ENCODE measurements at regions of chr6 and their contacts with region 1.

Region 1: DNA sequence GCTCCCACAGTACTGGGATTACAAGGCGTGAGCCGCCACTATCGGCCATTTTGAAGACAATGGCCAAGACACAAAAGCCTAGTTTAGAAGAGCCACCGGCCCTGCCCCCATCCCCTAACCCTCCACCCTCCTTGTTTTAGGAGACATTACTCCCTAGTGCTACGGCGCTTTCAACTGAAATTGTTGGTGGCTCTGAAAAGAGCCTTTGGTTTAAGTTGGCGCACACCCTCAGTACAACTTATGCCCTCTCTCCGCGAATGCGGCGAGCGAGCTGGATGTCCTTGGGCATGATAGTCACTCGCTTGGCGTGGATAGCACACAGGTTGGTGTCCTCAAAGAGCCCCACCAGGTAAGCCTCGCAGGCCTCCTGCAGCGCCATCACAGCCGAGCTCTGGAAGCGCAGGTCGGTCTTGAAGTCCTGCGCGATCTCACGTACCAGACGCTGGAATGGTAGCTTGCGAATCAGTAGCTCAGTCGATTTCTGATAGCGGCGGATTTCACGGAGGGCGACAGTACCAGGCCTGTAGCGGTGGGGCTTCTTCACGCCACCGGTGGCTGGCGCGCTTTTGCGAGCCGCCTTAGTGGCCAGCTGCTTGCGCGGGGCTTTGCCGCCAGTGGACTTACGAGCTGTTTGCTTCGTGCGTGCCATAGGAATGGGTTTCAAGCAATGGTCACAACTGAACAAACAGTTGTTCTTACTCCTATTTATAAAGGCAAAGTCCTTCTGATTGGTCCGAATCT is 114.9 kb upstream of the BTN3A2 start:
- DNase-seq: peak; percentile 84
- ATAC-seq: peak; percentile 68
- H3K4me3 Mint-ChIP-seq: peak overlapping the region; percentile 82
- H3K27ac Mint-ChIP-seq: peak overlapping the region; percentile 99
- H3K4me1 Mint-ChIP-seq: peaks cover 27% of the 10 kb centered on the region
- H3K27me3 Mint-ChIP-seq: no peaks in the 10 kb centered on the region
- CTCF ChIP-seq: peak; percentile 43

Region 2: GRCh38 chr6:26175428-26176181 is 74.5 kb before region 1 on chr6:
- CTCF ChIA-PET with region 1: interaction called, 4 read pairs
- POLR2A ChIA-PET with region 1: interaction called, 11 read pairs
- intact Hi-C with region 1: no loop called
- DNase-seq: peak; percentile 72
- ATAC-seq: peak; percentile 17
- H3K4me3 Mint-ChIP-seq: peak overlapping the region; percentile 46
- H3K27ac Mint-ChIP-seq: peak overlapping the region; percentile 63
- H3K4me1 Mint-ChIP-seq: peaks cover 38% of the 10 kb centered on the region
- H3K27me3 Mint-ChIP-seq: no peaks in the 10 kb centered on the region
- CTCF ChIP-seq: peak; percentile 86

Region 3: DNA sequence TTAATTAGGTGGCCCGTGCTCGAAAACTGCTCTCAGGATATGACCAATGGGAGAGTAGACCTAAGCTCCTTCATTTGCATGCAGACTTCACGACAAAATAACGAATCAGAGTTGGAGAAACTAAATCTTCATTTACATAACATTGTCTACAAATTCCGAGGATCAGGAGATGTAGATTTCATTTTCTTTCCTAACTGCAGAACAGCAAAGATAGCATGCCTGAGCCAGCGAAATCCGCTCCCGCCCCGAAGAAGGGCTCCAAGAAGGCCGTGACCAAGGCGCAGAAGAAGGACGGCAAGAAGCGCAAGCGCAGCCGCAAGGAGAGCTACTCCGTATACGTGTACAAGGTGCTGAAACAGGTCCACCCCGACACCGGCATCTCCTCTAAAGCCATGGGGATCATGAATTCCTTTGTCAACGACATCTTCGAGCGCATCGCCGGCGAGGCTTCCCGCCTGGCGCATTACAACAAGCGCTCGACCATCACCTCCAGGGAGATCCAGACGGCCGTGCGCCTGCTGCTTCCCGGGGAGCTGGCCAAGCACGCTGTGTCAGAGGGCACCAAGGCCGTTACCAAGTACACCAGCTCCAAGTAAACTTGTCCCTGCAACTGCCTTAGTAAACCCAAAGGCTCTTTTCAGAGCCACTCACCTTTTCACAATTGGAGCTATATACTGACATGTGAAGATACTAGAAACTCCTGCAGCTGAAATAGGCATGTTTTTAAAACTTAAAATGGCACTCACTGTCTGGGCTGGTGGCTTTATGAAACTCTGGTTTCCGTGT is 66.4 kb before region 1 on chr6:
- CTCF ChIA-PET with region 1: interaction called, 5 read pairs
- POLR2A ChIA-PET with region 1: interaction called, 20 read pairs
- intact Hi-C with region 1: no loop called
- DNase-seq: peak; percentile 72
- ATAC-seq: peak; percentile 82
- H3K4me3 Mint-ChIP-seq: peak overlapping the region; percentile 76
- H3K27ac Mint-ChIP-seq: peak overlapping the region; percentile 84
- H3K4me1 Mint-ChIP-seq: peaks cover 38% of the 10 kb centered on the region
- H3K27me3 Mint-ChIP-seq: no peaks in the 10 kb centered on the region
- CTCF ChIP-seq: no peak

Region 4: GRCh38 chr6:26204332-26205165 is 45.6 kb before region 1 on chr6:
- CTCF ChIA-PET with region 1: interaction called, 3 read pairs
- POLR2A ChIA-PET with region 1: interaction called, 66 read pairs
- intact Hi-C with region 1: no loop called
- DNase-seq: peak; percentile 91
- ATAC-seq: peak; percentile 75
- H3K4me3 Mint-ChIP-seq: no peak overlapping the region
- H3K27ac Mint-ChIP-seq: no peak overlapping the region
- H3K4me1 Mint-ChIP-seq: peaks cover 17% of the 10 kb centered on the region
- H3K27me3 Mint-ChIP-seq: no peaks in the 10 kb centered on the region
- CTCF ChIP-seq: no peak

Region 5: DNA sequence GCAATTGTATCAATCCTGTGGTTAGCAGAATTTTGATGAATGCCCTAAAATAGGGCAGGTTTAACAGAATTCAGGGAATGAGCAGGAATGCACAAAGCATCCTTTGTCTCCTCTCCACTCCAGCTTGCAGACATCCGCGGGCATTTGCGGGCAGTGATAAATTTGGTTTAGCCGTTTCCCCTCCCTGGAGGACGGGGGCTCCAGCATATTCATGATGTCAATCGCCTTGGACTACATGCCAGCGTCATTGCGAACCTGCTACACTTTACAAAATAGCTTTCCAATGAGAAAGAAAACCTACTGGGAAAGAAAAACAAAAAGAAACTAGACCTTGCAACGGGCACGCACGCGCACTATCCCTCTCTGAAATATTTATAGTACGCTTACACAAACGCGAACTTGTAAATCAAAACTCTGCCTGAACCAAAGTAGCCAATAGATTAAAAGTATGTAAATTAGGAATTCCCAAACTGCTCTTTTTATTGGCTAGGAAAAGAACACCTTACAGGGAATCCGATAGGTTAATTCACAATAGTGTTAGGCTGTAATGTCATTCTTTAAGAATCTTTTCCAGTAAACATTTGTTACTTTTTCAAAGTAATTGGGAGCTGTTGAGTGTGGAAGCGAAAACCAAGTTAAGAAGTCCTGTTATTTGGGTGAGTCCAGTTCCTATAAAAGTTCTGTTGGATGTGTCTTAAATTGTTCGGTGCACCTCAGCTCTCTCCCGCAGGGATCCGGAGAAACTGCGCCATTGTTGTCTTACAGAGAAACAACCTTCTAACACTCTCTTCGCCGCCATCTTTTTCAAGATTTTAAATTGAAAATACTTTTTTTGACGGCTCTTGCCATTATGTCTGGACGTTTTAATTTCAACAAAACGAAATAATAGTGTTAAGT is 26.2 kb before region 1 on chr6:
- CTCF ChIA-PET with region 1: interaction called, 8 read pairs
- POLR2A ChIA-PET with region 1: interaction called, 35 read pairs
- intact Hi-C with region 1: no loop called
- DNase-seq: peak; percentile 77
- ATAC-seq: peak; percentile 82
- H3K4me3 Mint-ChIP-seq: no peak overlapping the region
- H3K27ac Mint-ChIP-seq: no peak overlapping the region
- H3K4me1 Mint-ChIP-seq: peaks cover 14% of the 10 kb centered on the region
- H3K27me3 Mint-ChIP-seq: no peaks in the 10 kb centered on the region
- CTCF ChIP-seq: no peak

Region 6: DNA sequence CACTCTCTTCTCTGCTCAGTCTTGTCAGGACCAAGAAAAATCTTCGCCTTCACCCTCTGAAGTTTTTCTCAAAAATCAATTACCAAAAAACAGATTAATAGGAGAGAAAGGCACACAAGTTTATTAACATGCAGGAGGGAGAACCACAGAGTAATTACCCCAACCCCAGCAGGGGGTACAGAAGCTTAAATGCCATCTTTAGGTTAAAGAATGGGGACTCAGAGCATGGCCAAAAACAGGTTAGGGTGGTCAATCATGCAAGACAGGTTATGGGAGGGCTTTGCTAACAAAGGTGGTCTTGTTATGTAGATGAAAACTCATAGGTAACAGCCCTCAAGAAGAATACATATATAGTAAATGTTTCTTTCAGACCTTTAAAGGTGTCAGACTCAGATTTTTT is 14.4 kb after region 1 on chr6:
- CTCF ChIA-PET with region 1: interaction called, 8 read pairs
- POLR2A ChIA-PET with region 1: interaction called, 119 read pairs
- intact Hi-C with region 1: no loop called
- DNase-seq: no peak
- ATAC-seq: no peak
- H3K4me3 Mint-ChIP-seq: no peak overlapping the region
- H3K27ac Mint-ChIP-seq: no peak overlapping the region
- H3K4me1 Mint-ChIP-seq: peaks cover 6% of the 10 kb centered on the region
- H3K27me3 Mint-ChIP-seq: no peaks in the 10 kb centered on the region
- CTCF ChIP-seq: no peak

Region 7: GRCh38 chr6:26354162-26354561 is 104.0 kb after region 1 on chr6:
- CTCF ChIA-PET with region 1: no interaction called
- POLR2A ChIA-PET with region 1: no interaction called
- intact Hi-C with region 1: no loop called
- DNase-seq: no peak
- ATAC-seq: no peak
- H3K4me3 Mint-ChIP-seq: no peak overlapping the region
- H3K27ac Mint-ChIP-seq: no peak overlapping the region
- H3K4me1 Mint-ChIP-seq: peaks cover 3% of the 10 kb centered on the region
- H3K27me3 Mint-ChIP-seq: no peaks in the 10 kb centered on the region
- CTCF ChIP-seq: no peak

Measured in activated CD8-positive, alpha-beta T cell treated with anti-CD3 and anti-CD28 coated beads for 36 hours (primary cell).